Gastrocnemius medialis (tissue), 4 donors: ENCODE measurements at regions of chr9 and their contacts with region 1.

Region 1: GRCh38 chr9:99595796-99596195 is 225.9 kb upstream of the NR4A3 start:
- DNase-seq: no peak
- ATAC-seq: no peak
- H3K4me3 ChIP-seq: no peak overlapping the region
- H3K27ac ChIP-seq: no peak overlapping the region
- H3K4me1 ChIP-seq: no peaks in the 10 kb centered on the region
- H3K27me3 ChIP-seq: no peaks in the 10 kb centered on the region
- CTCF ChIP-seq: no peak
- POLR2A ChIP-seq: no peak

Region 2: DNA sequence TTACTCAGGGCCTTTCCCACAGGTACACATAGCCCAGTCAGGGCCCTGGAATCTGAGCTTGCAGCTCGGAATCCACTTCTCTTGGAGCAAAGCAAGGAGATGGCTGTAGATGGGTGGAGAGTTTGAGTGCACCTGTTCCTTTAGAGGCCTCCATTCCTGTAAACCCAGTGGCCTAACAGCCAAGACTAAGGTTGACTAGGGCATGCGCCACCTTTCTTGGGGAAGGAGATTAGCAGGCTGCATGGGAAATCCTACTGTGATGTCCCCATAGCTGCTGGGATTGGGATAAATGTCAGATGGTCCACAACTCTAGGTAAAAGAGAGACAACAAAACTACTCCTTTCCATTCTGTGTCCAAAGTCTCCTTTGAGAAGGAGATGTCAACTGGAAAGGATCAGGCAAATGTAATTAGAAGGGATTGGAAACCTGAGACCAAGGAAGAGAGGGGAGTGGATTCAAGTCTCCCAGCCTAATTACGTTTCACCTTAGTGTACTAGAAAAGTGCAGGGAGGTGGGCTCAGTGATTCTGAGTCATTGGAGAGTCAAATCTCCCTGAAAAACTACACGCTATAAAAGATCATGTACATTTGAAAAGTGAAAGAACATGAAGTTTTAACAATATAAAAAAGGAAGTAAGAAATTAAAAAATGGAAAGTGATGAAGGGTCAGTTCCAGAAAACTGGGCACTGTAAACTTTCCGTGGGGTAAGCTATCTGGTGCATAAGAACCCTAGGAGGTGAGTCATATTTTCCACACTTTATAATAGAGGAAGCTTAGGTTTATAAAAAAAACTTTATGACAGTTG is 269.5 kb before region 1 on chr9:
- in situ Hi-C with region 1: loop called in 1 of 4 experiments (anchors 25 kb)
- intact Hi-C with region 1: no loop called
- DNase-seq: no peak
- ATAC-seq: no peak
- H3K4me3 ChIP-seq: no peak overlapping the region
- H3K27ac ChIP-seq: no peak overlapping the region
- H3K4me1 ChIP-seq: no peaks in the 10 kb centered on the region
- H3K27me3 ChIP-seq: no peaks in the 10 kb centered on the region
- CTCF ChIP-seq: no peak
- POLR2A ChIP-seq: no peak

Region 3: DNA sequence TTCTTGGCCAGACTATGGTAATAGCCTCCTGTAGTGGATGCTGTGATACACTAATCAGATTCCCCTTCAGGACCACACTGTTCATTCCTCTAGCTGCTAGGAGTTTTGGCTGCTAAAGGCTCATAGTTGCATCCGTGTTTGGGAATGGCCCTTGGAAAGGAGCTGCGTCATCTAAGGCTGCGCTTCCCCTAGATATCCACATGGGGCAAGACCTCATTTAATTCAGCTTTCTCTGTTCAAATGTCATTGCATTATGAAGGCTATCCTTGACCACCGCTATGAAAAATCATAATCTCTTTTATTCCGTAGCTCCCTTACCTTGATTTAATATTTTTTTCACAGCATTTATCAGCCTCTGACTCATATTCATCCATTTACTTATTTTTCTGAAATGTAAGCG is 32.4 kb before region 1 on chr9:
- in situ Hi-C with region 1: no loop called
- intact Hi-C with region 1: no loop called
- DNase-seq: no peak
- ATAC-seq: no peak
- H3K4me3 ChIP-seq: no peak overlapping the region
- H3K27ac ChIP-seq: no peak overlapping the region
- H3K4me1 ChIP-seq: peaks cover 0 to 4% of the 10 kb centered on the region in 2 donors
- H3K27me3 ChIP-seq: no peaks in the 10 kb centered on the region
- CTCF ChIP-seq: no peak
- POLR2A ChIP-seq: no peak

Region 4: GRCh38 chr9:99878651-99879050 is 282.9 kb after region 1 on chr9:
- in situ Hi-C with region 1: no loop called
- intact Hi-C with region 1: no loop called
- DNase-seq: no peak
- ATAC-seq: no peak
- H3K4me3 ChIP-seq: no peak overlapping the region
- H3K27ac ChIP-seq: no peak overlapping the region
- H3K4me1 ChIP-seq: no peaks in the 10 kb centered on the region
- H3K27me3 ChIP-seq: no peaks in the 10 kb centered on the region
- CTCF ChIP-seq: no peak
- POLR2A ChIP-seq: no peak